Aorta (tissue), 5 donors: ENCODE measurements at regions of chr19 and their contacts with region 1.

Region 1: GRCh38 chr19:40542202-40542859 is 34.3 kb upstream of the SHKBP1 start:
- DNase-seq: peak; percentile 84 to 86
- ATAC-seq: peak; percentile 88
- H3K4me3 ChIP-seq: no peak overlapping the region
- H3K27ac ChIP-seq: no peak overlapping the region
- H3K4me1 ChIP-seq: no peaks in the 10 kb centered on the region
- H3K27me3 ChIP-seq: no peaks in the 10 kb centered on the region

Region 2: GRCh38 chr19:40576585-40577451 is 34.5 kb after region 1 on chr19 and contains the start of gene SHKBP1:
- intact Hi-C with region 1: loop called in 1 of 2 experiments (anchors 5 kb)
- DNase-seq: peak; percentile 97 to 98
- ATAC-seq: peak; percentile 95
- H3K4me3 ChIP-seq: peak within 1 kb of the TSS; percentile 65 to 93
- H3K27ac ChIP-seq: no peak within 1 kb of the TSS
- H3K4me1 ChIP-seq: no peaks in the 10 kb centered on the region
- H3K27me3 ChIP-seq: no peaks in the 10 kb centered on the region
- total RNA-seq, gene SHKBP1: 54.0 to 75.3 TPM

Region 3: GRCh38 chr19:40598121-40598917 is 56.0 kb after region 1 on chr19:
- intact Hi-C with region 1: loop called (anchors 5 kb)
- DNase-seq: peak; percentile 91 to 97
- ATAC-seq: peak; percentile 84
- H3K4me3 ChIP-seq: no peak overlapping the region
- H3K27ac ChIP-seq: no peak overlapping the region
- H3K4me1 ChIP-seq: no peaks in the 10 kb centered on the region
- H3K27me3 ChIP-seq: no peaks in the 10 kb centered on the region